Natural killer cell (primary cell): ENCODE measurements at regions of chr19 and their contacts with region 1.

Region 1: DNA sequence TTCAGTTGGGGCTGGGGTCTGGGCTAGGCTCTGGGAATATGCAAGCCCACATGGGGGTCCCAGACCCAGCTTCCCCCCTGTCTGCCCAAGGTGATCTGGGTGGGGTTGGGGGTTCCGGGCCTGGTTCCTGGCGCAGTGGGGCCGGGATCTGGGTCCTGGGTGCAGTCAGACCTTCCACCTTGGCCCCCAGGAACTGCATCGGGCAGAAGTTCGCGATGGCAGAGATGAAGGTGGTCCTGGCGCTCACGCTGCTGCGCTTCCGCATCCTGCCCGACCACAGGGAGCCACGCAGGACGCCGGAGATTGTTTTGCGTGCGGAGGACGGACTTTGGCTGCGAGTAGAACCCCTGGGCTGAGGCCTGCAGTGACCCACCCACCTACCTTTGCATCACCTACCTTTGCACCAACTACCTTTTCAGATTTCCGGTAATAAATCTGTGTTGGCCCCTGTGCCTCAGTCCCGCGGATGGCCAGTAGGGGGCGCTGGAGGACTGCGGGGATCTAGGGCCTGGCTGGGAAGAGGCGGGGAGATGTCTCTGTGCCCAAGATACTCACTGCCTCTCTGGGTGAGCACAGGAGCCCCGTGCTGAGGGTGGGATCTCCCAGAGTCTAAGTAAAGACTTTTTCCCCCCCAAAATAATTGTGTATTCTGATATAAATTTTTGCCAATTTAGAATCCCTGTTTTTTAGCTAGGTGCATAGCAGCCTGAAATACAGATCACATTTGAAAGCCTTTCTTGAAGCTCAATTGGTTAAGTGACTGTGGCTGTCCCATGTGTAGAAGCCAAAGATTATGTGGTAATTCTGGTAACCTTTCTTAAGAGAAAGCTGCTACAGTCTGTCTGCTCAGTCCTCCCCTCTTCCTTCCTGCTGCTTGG is 11.5 kb upstream of the CYP4F3 start:
- DNase-seq: peak; percentile 84 to 90
- ATAC-seq: peak; percentile 89 to 96 (median 95)
- H3K4me3 ChIP-seq: no peak overlapping the region
- H3K4me3 Mint-ChIP-seq: no peak overlapping the region
- H3K27ac ChIP-seq: no peak overlapping the region
- H3K27ac Mint-ChIP-seq: no peak overlapping the region
- H3K4me1 ChIP-seq: peaks cover 7% of the 10 kb centered on the region
- H3K4me1 Mint-ChIP-seq: peaks cover 6 to 8% of the 10 kb centered on the region in 2 donors
- H3K27me3 ChIP-seq: no peaks in the 10 kb centered on the region
- H3K27me3 Mint-ChIP-seq: peaks cover 6 to 8% of the 10 kb centered on the region in 2 donors
- CTCF ChIP-seq: peak; percentile 79

Region 2: DNA sequence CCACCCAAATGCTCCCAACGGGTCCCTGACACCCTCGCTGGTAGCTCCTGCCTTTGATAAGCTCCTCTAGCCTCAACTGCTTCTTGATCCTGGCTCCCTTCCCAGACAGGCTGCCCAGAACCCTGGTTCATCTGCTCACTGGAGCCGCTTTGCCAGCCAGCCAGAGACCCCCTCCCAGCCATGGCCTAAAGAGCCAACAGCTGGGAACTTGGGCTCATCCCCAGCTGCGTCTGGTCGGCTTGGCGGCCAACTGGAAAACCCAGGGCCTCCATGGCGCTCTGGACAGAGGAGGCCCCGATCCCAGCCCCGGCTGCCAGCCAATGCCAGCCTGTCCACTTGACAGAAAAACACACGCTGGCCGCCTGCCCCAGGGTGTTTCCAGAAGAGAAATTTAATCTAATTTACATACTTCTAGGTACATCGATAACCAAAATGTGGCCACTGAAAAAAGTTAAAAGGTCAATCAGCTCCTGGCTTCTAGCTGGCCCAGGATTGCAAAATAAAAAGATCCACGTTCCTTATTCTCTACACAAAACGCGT is 207.5 kb before region 1 on chr19:
- intact Hi-C with region 1: no loop called
- DNase-seq: no peak
- ATAC-seq: no peak
- H3K4me3 ChIP-seq: no peak overlapping the region
- H3K4me3 Mint-ChIP-seq: no peak overlapping the region
- H3K27ac ChIP-seq: no peak overlapping the region
- H3K27ac Mint-ChIP-seq: no peak overlapping the region
- H3K4me1 ChIP-seq: peaks cover 22% of the 10 kb centered on the region
- H3K4me1 Mint-ChIP-seq: peaks cover 27 to 32% of the 10 kb centered on the region in 2 donors
- H3K27me3 ChIP-seq: no peaks in the 10 kb centered on the region
- H3K27me3 Mint-ChIP-seq: no peaks in the 10 kb centered on the region
- CTCF ChIP-seq: no peak

Region 3: GRCh38 chr19:15563931-15564330 is 65.3 kb before region 1 on chr19:
- intact Hi-C with region 1: no loop called
- DNase-seq: no peak
- ATAC-seq: no peak
- H3K4me3 ChIP-seq: no peak overlapping the region
- H3K4me3 Mint-ChIP-seq: no peak overlapping the region
- H3K27ac ChIP-seq: no peak overlapping the region
- H3K27ac Mint-ChIP-seq: no peak overlapping the region
- H3K4me1 ChIP-seq: no peaks in the 10 kb centered on the region
- H3K4me1 Mint-ChIP-seq: no peaks in the 10 kb centered on the region
- H3K27me3 ChIP-seq: no peaks in the 10 kb centered on the region
- H3K27me3 Mint-ChIP-seq: peaks cover 17 to 33% of the 10 kb centered on the region in 2 donors
- CTCF ChIP-seq: no peak

Region 4: GRCh38 chr19:15717809-15718208 is 88.6 kb after region 1 on chr19:
- intact Hi-C with region 1: no loop called
- DNase-seq: no peak
- ATAC-seq: no peak
- H3K4me3 ChIP-seq: no peak overlapping the region
- H3K4me3 Mint-ChIP-seq: no peak overlapping the region
- H3K27ac ChIP-seq: no peak overlapping the region
- H3K27ac Mint-ChIP-seq: no peak overlapping the region
- H3K4me1 ChIP-seq: no peaks in the 10 kb centered on the region
- H3K4me1 Mint-ChIP-seq: no peaks in the 10 kb centered on the region
- H3K27me3 ChIP-seq: no peaks in the 10 kb centered on the region
- H3K27me3 Mint-ChIP-seq: peaks cover 34 to 62% of the 10 kb centered on the region in 2 donors
- CTCF ChIP-seq: no peak

Region 5: GRCh38 chr19:15869109-15869555 is 239.9 kb after region 1 on chr19:
- intact Hi-C with region 1: loop called (anchors 2 kb)
- DNase-seq: peak in 1 of 2 donors; percentile 77
- ATAC-seq: peak; percentile 59 to 96 (median 66)
- H3K4me3 ChIP-seq: no peak overlapping the region
- H3K4me3 Mint-ChIP-seq: no peak overlapping the region
- H3K27ac ChIP-seq: no peak overlapping the region
- H3K27ac Mint-ChIP-seq: no peak overlapping the region
- H3K4me1 ChIP-seq: peaks cover 9% of the 10 kb centered on the region
- H3K4me1 Mint-ChIP-seq: peaks cover 5 to 7% of the 10 kb centered on the region in 2 donors
- H3K27me3 ChIP-seq: peaks cover 2% of the 10 kb centered on the region
- H3K27me3 Mint-ChIP-seq: peaks cover 10 to 14% of the 10 kb centered on the region in 2 donors
- CTCF ChIP-seq: peak; percentile 50

Region 6: DNA sequence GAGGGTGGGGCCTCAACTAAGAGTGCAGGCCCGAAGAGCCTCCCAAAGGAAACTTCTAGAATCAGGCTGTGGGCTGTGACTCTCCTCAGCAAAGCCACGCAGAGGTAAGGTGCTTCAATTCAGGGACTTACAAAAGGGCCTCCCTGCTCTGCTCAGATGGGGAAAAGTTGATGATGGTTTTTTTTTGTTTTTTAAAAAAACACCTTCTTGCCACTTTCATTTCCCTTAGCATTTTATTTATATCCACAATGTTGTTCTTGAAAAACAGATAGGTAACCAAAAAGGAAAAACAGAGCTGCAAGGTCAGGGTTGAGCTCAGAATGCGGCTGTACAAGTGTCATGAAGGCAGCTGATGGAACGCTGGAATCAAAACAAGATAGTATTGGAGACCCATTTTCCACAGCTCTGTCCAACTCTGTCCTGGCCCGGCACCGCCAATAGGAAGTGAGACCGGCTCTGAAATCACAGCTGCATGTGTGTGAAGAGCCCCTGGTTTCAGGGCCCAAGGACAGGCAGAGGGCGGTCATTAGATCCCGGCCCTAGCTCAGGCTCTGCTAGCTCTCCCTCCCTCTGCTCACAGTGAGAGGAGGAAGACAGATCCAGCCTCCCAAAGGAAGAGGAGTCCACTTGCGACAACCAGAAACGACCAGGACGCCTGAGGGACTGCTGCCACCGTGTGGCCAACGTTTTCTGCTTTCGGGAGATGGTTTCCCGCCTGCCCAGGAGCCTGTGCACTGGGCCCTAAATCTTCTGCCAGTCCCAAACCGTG is 753.7 kb after region 1 on chr19:
- intact Hi-C with region 1: loop called (anchors 10 kb)
- DNase-seq: peak; percentile 73 to 92
- ATAC-seq: peak; percentile 69 to 75 (median 73)
- H3K4me3 ChIP-seq: peak overlapping the region; percentile 8
- H3K4me3 Mint-ChIP-seq: peak overlapping the region; percentile 81
- H3K27ac ChIP-seq: peak overlapping the region; percentile 85
- H3K27ac Mint-ChIP-seq: peak overlapping the region; percentile 90 to 95
- H3K4me1 ChIP-seq: peaks cover 63% of the 10 kb centered on the region
- H3K4me1 Mint-ChIP-seq: peaks cover 39 to 60% of the 10 kb centered on the region in 2 donors
- H3K27me3 ChIP-seq: no peaks in the 10 kb centered on the region
- H3K27me3 Mint-ChIP-seq: no peaks in the 10 kb centered on the region
- CTCF ChIP-seq: peak; percentile 87

Region 7: GRCh38 chr19:16400911-16401591 is 771.8 kb after region 1 on chr19:
- intact Hi-C with region 1: loop called (anchors 10 kb)
- DNase-seq: no peak
- ATAC-seq: no peak
- H3K4me3 ChIP-seq: no peak overlapping the region
- H3K4me3 Mint-ChIP-seq: no peak overlapping the region
- H3K27ac ChIP-seq: no peak overlapping the region
- H3K27ac Mint-ChIP-seq: peak overlapping the region; percentile 24 to 43
- H3K4me1 ChIP-seq: peaks cover 18% of the 10 kb centered on the region
- H3K4me1 Mint-ChIP-seq: no peaks in the 10 kb centered on the region
- H3K27me3 ChIP-seq: no peaks in the 10 kb centered on the region
- H3K27me3 Mint-ChIP-seq: no peaks in the 10 kb centered on the region
- CTCF ChIP-seq: no peak